ENCODE measurements at regions of chr11 and their contacts with region 1.

Region 1: GRCh38 chr11:124673333-124674167 is at the starts of genes SIAE and SPA17:
- DNase-seq: peak; percentile 84 to 91 (median 88)
- H3K4me3 ChIP-seq: peak within 1 kb of the TSS; percentile 39 to 73
- H3K4me3 Mint-ChIP-seq: peak within 1 kb of the TSS; percentile 90 to 95 (median 91)
- H3K27ac ChIP-seq: peak within 1 kb of the TSS; percentile 66
- H3K27ac Mint-ChIP-seq: peak within 1 kb of the TSS; percentile 98 to 99 (median 99)
- H3K4me1 ChIP-seq: peaks cover 42% of the 10 kb centered on the region
- H3K4me1 Mint-ChIP-seq: peaks cover 16 to 43% (median 32%) of the 10 kb centered on the region in 4 donors
- H3K27me3 ChIP-seq: peaks cover 5% of the 10 kb centered on the region
- H3K27me3 Mint-ChIP-seq: no peaks in the 10 kb centered on the region
- total RNA-seq, gene SIAE: 4.2 to 4.8 TPM
- total RNA-seq, gene SPA17: 0.55 to 0.81 TPM

Region 2: GRCh38 chr11:124644426-124645280 is 28.9 kb before region 1 on chr11:
- CTCF ChIA-PET with region 1: interaction called, 10 read pairs
- POLR2A ChIA-PET with region 1: no interaction called
- intact Hi-C with region 1: loop called (anchors 1 kb)
- DNase-seq: peak in 4 of 5 donors; percentile 25 to 36 (median 31)
- H3K4me3 ChIP-seq: no peak overlapping the region
- H3K4me3 Mint-ChIP-seq: no peak overlapping the region
- H3K27ac ChIP-seq: no peak overlapping the region
- H3K27ac Mint-ChIP-seq: no peak overlapping the region
- H3K4me1 ChIP-seq: peaks cover 4% of the 10 kb centered on the region
- H3K4me1 Mint-ChIP-seq: peaks cover 0 to 4% (median under 1%) of the 10 kb centered on the region in 4 donors
- H3K27me3 ChIP-seq: no peaks in the 10 kb centered on the region
- H3K27me3 Mint-ChIP-seq: no peaks in the 10 kb centered on the region

Region 3: GRCh38 chr11:124746621-124747243 is 73.2 kb after region 1 on chr11:
- CTCF ChIA-PET with region 1: interaction called, 69 read pairs
- POLR2A ChIA-PET with region 1: interaction called, 40 read pairs
- intact Hi-C with region 1: loop called (anchors 1 kb)
- DNase-seq: peak; percentile 80 to 86 (median 85)
- H3K4me3 ChIP-seq: peak overlapping the region; percentile 76 to 97
- H3K4me3 Mint-ChIP-seq: peak overlapping the region; percentile 96 to 99 (median 98)
- H3K27ac ChIP-seq: peak overlapping the region; percentile 58
- H3K27ac Mint-ChIP-seq: peak overlapping the region; percentile 83 to 98 (median 94)
- H3K4me1 ChIP-seq: peaks cover 6% of the 10 kb centered on the region
- H3K4me1 Mint-ChIP-seq: peaks cover 6 to 21% (median 9%) of the 10 kb centered on the region in 4 donors
- H3K27me3 ChIP-seq: no peaks in the 10 kb centered on the region
- H3K27me3 Mint-ChIP-seq: peaks cover 0 to 1% of the 10 kb centered on the region in 2 donors

Region 4: DNA sequence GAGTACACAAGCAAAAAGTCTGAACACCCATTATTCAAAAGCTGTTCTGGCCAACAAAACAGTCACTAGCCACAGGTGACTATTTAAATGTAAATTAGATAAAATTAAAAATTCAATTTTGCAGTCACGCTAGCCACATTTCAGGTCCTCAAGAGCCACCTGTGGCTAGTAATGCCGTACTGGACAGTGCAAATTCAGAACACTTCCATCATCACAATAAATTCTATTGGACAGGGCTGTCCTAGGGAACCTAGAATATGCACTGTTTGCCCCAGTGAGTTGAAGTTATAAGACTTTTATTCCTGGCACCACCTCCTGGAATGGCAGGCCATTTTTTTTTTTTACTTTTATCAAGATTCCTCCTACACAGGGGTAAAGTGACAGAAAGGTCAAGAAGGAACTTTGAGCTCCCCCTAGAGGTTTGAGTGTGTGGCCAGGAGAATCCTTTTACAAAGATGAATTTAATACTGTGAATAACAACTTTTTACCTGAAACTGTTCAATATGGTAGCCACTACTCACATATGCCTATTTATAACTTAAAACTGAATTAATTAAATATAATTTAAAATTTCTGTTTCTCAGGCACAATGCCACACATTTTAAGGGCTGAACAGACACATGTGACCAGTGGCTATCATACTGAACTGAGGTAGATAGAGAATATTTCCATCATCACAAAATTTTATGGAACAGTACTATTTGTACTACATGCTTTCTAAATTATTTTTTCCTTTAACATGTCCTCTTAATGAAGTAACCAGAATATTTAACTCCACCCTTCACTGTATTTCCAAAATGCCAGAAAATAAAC is 120.1 kb after region 1 on chr11:
- CTCF ChIA-PET with region 1: interaction called, 60 read pairs
- POLR2A ChIA-PET with region 1: interaction called, 4 read pairs
- intact Hi-C with region 1: loop called (anchors 1 kb)
- DNase-seq: peak in 4 of 5 donors; percentile 30 to 46 (median 36)
- H3K4me3 ChIP-seq: no peak overlapping the region
- H3K4me3 Mint-ChIP-seq: no peak overlapping the region
- H3K27ac ChIP-seq: no peak overlapping the region
- H3K27ac Mint-ChIP-seq: no peak overlapping the region
- H3K4me1 ChIP-seq: peaks cover 12% of the 10 kb centered on the region
- H3K4me1 Mint-ChIP-seq: peaks cover 15 to 47% (median 26%) of the 10 kb centered on the region in 4 donors
- H3K27me3 ChIP-seq: no peaks in the 10 kb centered on the region
- H3K27me3 Mint-ChIP-seq: no peaks in the 10 kb centered on the region

Region 5: DNA sequence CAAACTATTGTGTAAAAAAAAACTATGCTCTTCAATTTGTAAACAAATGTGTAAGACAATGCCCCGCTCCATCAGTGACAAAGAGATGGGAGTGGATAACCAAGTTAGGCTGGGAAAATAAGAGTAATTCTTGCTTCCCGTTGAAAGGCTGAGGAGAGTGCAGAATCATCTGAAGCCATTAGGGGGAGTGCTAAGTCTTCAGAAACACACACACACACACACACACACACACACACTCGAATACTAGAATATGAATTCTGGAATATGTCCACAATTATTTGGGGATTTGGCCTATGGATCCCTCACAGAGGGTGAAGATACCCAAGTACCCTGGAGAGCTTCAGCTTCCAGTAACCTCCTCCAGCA is 163.9 kb after region 1 on chr11:
- CTCF ChIA-PET with region 1: interaction called, 166 read pairs
- POLR2A ChIA-PET with region 1: interaction called, 5 read pairs
- intact Hi-C with region 1: loop called (anchors 1 kb)
- DNase-seq: peak in 1 of 5 donors; percentile 10
- H3K4me3 ChIP-seq: no peak overlapping the region
- H3K4me3 Mint-ChIP-seq: peak overlapping the region in 1 of 8 donors; percentile 84
- H3K27ac ChIP-seq: no peak overlapping the region
- H3K27ac Mint-ChIP-seq: peak overlapping the region in 1 of 7 donors; percentile 74
- H3K4me1 ChIP-seq: peaks cover 10% of the 10 kb centered on the region
- H3K4me1 Mint-ChIP-seq: peaks cover 8 to 21% (median 14%) of the 10 kb centered on the region in 4 donors
- H3K27me3 ChIP-seq: peaks cover 41% of the 10 kb centered on the region
- H3K27me3 Mint-ChIP-seq: peaks cover 43 to 70% of the 10 kb centered on the region in 2 donors

Region 6: GRCh38 chr11:125287491-125288210 is 614.1 kb after region 1 on chr11:
- CTCF ChIA-PET with region 1: no interaction called
- POLR2A ChIA-PET with region 1: no interaction called
- intact Hi-C with region 1: no loop called
- DNase-seq: no peak
- H3K4me3 ChIP-seq: no peak overlapping the region
- H3K4me3 Mint-ChIP-seq: no peak overlapping the region
- H3K27ac ChIP-seq: no peak overlapping the region
- H3K27ac Mint-ChIP-seq: no peak overlapping the region
- H3K4me1 ChIP-seq: no peaks in the 10 kb centered on the region
- H3K4me1 Mint-ChIP-seq: no peaks in the 10 kb centered on the region
- H3K27me3 ChIP-seq: no peaks in the 10 kb centered on the region
- H3K27me3 Mint-ChIP-seq: peaks cover 5 to 6% of the 10 kb centered on the region in 2 donors